ENCODE measurements at regions of chr11 and their contacts with region 1.

Region 1: GRCh38 chr11:355581-356458 is 13.5 kb upstream of the B4GALNT4 start:
- DNase-seq: peak; percentile 81
- H3K4me3 ChIP-seq: peak overlapping the region; percentile 55
- H3K27ac ChIP-seq: peak overlapping the region; percentile 73
- H3K4me1 ChIP-seq: peaks cover 41% of the 10 kb centered on the region
- CTCF ChIP-seq: no peak

Region 2: DNA sequence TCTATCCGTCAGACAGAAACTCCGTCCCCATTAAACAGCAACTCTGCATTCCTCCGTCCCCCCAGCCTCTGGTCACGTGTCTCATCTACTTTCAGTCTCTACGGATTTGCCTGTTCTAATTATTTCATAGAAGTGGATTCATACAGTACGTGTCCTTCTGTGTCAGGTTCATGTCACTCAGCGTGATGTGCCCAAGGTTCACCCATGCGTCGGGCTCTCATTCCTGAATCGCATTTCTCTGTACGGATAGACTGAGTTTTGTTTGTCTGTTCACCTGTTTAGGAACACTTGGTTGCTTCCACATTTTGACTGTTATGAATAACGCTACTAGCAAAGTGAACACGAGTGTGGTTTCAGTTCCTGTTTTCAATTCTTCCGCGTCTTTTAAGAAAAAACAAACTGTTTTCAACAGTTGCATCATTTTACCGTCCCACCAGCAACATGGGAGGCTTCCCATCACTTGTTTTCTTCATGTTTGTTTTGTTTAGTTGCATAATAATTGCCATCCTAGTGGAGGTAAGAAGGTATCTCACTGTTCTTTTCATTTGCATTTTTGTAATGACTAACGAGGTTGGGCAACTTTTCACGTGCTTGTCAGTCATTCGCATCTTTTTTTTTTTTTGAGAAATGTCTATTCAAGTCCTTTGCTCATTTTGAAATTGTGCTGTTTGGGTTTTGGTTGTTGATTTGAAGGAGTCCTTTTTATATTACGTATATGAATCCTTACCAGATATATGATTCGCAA is 86.5 kb before region 1 on chr11:
- CTCF ChIA-PET with region 1: interaction called, 6 read pairs
- POLR2A ChIA-PET with region 1: no interaction called
- intact Hi-C with region 1: loop called (anchors 2 kb)
- DNase-seq: peak; percentile 99
- H3K4me3 ChIP-seq: peak overlapping the region; percentile 62
- H3K27ac ChIP-seq: peak overlapping the region; percentile 92
- H3K4me1 ChIP-seq: peaks cover 31% of the 10 kb centered on the region
- CTCF ChIP-seq: no peak

Region 3: DNA sequence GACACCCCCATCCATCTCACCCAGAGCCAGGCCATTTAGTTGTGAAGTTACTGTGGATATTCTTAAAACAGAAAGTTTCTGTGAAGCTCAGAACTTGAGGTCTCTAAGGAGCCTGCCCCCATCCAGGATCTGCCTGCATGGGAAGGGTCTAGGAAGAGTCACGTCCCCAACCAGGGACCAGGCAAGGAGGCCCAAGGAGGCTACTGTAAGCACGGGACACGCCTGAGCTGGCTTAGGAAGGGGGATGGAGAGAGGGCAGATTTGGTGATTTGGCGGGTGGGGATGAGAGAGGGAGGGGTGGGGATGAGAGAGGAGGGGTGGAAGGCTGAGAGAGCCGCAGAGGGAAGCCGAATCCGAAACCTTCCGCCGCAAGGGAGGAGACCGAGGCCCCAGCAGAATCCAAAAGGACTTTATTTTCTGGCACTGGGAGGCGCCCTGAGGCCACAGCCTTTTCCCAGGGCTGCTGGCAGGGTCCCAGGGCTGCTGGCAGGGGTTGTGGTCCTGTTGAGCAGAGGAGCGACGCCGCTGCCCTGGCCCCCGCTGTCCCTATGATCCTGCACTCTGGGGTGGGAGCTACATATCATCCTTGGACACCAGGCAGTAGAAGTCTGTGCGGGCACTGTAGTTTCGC is 49.6 kb after region 1 on chr11:
- CTCF ChIA-PET with region 1: no interaction called
- POLR2A ChIA-PET with region 1: no interaction called
- intact Hi-C with region 1: no loop called
- DNase-seq: no peak
- H3K4me3 ChIP-seq: no peak overlapping the region
- H3K27ac ChIP-seq: no peak overlapping the region
- H3K4me1 ChIP-seq: peaks cover 11% of the 10 kb centered on the region
- CTCF ChIP-seq: no peak

Measured in OCI-LY7 (cell line).